MCF 10A (cell line): ENCODE measurements at regions of chr5 and their contacts with region 1.

Region 1: DNA sequence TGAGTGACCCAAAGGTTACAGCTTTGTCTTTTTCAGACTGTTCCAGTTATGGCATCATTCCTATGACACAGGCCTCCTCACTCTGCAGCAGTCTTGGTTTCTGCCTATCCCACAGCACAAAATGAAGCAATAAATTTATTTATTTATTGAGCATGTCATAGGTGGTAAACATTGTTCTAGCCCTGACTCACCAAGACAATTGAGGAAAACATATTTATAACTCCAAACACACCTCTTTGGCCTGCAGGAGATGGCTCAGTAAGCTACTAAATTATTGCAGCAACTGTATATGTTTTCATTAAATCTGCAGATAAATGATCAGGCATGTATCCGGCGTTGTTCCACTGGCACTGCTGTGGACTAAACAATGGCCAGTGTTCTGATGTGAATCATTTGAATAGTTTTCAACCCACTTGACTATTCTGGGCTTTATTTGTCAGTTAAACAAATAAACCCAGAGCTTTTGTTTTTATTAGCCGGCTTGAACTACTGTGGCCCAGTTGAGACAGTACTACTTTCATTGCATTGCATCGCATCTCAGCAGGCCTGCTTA is 83.2 kb downstream of the FOXD1 start:
- DNase-seq: peak; percentile 69
- H3K4me3 Mint-ChIP-seq: no peak overlapping the region
- H3K27ac Mint-ChIP-seq: peak overlapping the region; percentile 71
- H3K4me1 Mint-ChIP-seq: peaks cover 33% of the 10 kb centered on the region
- H3K27me3 Mint-ChIP-seq: no peaks in the 10 kb centered on the region
- CTCF ChIP-seq: no peak

Region 2: DNA sequence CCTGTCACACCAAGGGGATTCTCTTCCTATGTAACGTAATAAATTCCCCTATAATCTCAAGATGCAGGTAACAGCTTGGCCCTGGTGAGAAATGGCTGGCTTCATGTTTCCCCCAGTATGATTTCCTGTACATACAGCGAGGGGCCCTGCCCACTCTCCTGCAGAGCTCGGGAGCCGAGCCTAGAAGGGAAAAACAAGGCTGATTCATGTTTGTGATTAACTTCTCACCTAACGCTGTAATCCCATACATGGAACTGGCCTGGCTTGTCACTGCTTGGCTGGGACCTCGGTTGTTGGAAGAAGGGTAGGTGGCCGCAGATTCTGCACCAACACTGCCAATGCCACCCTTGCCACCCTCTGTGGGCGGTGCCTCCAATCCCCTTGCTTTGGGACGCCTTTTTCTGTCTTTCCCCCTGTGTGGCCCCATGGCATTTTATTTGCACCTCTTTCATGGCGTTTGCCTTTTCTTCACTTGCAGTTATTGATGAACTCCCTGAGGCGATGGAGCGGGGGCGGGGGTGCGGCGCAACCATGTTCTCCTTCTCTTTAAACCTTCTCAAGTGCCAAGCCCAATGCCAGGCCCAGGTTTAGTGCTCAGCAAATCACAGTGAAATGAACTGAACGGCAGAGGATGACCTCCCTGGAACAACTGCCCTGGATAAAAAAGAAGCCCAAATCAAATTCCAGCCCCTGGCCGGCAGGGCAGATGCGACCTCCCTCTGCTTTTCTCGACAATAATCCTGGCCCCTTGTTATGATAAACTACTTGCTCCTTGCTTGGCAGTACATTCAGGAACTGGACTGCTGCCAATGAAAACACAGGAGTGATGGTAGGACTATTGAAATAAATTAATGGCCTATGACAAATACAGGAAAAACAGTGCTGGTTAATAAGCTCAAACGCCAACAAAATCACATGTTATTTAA is 84.3 kb before region 1 on chr5:
- CTCF ChIA-PET with region 1: no interaction called
- POLR2A ChIA-PET with region 1: interaction called, 23 read pairs
- intact Hi-C with region 1: no loop called
- DNase-seq: peak; percentile 96
- H3K4me3 Mint-ChIP-seq: peak overlapping the region; percentile 49
- H3K27ac Mint-ChIP-seq: peak overlapping the region; percentile 72
- H3K4me1 Mint-ChIP-seq: peaks cover 53% of the 10 kb centered on the region
- H3K27me3 Mint-ChIP-seq: no peaks in the 10 kb centered on the region
- CTCF ChIP-seq: no peak

Region 3: DNA sequence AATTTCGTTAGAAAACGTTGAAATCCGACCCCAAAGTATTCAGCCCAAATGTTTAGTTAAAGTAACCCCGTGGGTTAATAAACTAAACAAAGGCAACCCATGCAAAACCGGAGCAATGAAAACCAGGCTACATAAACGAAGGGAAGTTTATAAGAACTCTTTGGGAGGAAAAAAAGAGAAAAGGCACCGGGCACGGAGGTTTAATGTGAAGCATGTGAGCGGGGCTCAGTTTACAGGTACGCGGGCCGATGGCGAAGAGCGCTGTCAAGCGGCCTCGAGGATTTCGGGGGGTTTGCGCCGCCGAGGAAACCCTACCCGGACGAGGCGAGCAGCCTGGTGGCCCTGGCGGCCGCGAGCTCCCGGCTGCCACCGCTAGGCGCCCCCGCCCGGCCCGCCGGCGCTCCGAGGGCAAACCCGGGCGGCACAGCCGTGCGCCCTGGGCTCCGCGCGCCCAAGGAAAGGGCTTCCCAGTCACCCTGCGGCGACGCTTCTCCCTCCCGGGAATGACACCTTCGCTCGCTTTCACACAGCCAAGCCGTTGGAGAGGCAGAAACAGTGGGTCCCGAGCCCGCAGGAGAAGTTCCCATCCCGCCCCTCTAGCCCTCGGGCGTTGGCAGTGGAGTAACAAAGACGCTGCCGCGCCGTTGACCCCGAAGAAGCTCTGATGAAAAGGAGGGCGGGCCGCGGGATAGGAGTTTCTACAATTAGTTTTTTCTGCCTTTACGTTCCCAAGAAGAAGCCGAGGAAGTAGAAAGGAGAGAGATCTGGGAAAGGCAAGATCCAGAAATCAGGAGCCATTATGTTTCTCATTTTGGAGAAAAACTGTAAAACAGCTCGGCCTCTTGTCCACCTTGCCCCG is 66.4 kb before region 1 on chr5:
- CTCF ChIA-PET with region 1: no interaction called
- POLR2A ChIA-PET with region 1: no interaction called
- intact Hi-C with region 1: no loop called
- DNase-seq: no peak
- H3K4me3 Mint-ChIP-seq: no peak overlapping the region
- H3K27ac Mint-ChIP-seq: no peak overlapping the region
- H3K4me1 Mint-ChIP-seq: peaks cover 10% of the 10 kb centered on the region
- H3K27me3 Mint-ChIP-seq: no peaks in the 10 kb centered on the region
- CTCF ChIP-seq: no peak

Region 4: DNA sequence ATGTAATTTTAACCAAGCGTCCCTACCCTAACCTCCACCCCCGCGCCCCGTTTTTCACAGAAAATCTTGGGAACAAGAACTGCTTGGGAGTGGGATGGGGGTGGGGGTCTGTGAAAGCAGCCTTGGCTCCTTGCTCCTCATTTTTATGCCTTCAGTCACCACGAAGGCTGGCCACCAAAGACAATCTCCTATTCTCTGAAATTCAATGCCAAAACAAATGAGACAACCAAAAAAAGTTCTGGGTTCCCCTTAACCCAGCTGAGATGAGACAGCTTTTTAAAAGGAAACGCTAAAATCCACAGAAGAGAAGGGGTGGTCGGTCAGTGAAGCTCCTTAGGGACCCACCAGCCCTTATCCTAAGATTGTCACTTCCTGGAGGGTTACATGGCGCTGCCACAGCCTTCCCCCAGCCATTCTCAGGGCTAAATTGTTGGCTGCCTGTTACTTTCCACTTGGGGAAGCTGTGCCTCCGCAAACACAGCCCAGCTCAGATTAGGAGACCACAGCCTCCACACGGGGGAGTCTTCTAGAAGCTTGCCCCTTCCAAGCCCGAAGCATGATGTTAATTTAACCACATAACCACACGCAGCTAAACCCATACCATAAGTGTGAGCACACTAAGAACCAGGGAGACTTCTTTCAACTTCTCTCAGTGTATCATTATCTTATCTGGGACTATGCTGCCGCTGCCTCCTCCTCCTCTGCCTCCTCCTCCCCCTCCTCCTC is 53.1 kb before region 1 on chr5:
- CTCF ChIA-PET with region 1: interaction called, 4 read pairs
- POLR2A ChIA-PET with region 1: interaction called, 3 read pairs
- intact Hi-C with region 1: loop called (anchors 2 kb)
- DNase-seq: no peak
- H3K4me3 Mint-ChIP-seq: no peak overlapping the region
- H3K27ac Mint-ChIP-seq: peak overlapping the region; percentile 75
- H3K4me1 Mint-ChIP-seq: peaks cover 13% of the 10 kb centered on the region
- H3K27me3 Mint-ChIP-seq: no peaks in the 10 kb centered on the region
- CTCF ChIP-seq: no peak

Region 5: DNA sequence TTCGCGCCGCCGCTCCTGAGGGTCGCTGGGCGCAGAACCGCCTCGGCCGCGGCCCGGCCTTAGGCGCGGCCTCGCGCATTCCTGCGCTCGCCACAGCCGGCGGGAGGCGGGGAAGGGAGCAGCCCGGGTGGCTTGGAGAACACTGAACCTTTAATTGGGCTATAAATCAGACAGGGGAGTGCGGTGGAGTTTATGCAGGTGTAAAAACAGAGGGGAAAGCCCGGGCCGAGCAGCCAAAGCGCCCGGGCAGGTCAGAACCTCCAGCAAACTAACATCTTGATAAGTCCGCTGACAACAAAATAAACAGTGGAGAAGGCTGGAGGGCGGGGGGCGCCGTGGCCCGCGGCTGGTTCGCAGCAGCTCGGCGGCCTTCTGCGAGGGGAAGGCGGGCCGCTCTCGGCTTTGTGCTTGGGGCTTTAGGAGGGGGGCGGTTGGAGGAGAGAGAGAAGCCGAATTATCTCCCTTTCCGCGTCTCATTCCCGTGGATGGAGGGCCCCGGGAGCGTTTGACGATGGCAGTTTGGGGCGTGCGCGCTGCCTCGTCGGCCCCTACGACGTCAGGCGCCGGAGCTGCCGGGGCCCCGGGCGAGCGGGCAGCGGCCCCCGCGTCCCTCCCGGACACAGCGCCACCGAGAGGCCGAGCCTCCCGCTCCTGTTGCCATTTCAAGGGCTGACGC is 71.9 kb after region 1 on chr5:
- CTCF ChIA-PET with region 1: no interaction called
- POLR2A ChIA-PET with region 1: no interaction called
- intact Hi-C with region 1: no loop called
- DNase-seq: no peak
- H3K4me3 Mint-ChIP-seq: no peak overlapping the region
- H3K27ac Mint-ChIP-seq: no peak overlapping the region
- H3K4me1 Mint-ChIP-seq: peaks cover 8% of the 10 kb centered on the region
- H3K27me3 Mint-ChIP-seq: no peaks in the 10 kb centered on the region
- CTCF ChIP-seq: no peak

Region 6: DNA sequence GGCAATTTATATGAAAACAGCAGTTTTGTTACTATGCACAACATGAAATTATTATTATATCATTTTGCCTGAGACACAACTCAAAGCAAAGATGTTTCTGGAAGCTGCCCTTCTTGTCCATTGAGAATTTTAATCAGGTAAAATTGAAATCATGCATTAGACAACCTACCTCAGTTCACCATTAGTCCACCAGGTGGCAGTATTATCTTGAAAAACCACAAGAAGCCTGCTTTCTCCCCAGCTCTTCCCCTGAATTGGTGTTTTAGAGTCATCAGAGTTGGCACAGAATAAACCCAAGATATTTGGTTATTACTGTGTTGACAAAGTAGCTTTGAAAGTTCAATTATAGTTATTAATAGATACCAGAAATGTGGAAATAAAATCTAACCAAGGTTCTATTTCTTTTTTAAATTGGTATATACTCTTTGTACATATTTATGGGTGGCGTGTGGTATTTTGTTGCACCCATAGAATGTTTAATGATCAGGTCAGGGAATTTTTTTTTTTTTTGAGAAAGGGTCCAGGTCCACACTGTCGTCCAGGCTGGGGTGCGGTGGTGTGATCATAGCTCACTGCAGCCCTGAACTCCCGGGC is 225.8 kb after region 1 on chr5:
- CTCF ChIA-PET with region 1: no interaction called
- POLR2A ChIA-PET with region 1: no interaction called
- intact Hi-C with region 1: no loop called
- DNase-seq: peak; percentile 84
- H3K4me3 Mint-ChIP-seq: no peak overlapping the region
- H3K27ac Mint-ChIP-seq: no peak overlapping the region
- H3K4me1 Mint-ChIP-seq: peaks cover 14% of the 10 kb centered on the region
- H3K27me3 Mint-ChIP-seq: no peaks in the 10 kb centered on the region
- CTCF ChIP-seq: peak; percentile 64